PC-3 (cell line): ENCODE measurements at regions of chr12 and their contacts with region 1.

Region 1: DNA sequence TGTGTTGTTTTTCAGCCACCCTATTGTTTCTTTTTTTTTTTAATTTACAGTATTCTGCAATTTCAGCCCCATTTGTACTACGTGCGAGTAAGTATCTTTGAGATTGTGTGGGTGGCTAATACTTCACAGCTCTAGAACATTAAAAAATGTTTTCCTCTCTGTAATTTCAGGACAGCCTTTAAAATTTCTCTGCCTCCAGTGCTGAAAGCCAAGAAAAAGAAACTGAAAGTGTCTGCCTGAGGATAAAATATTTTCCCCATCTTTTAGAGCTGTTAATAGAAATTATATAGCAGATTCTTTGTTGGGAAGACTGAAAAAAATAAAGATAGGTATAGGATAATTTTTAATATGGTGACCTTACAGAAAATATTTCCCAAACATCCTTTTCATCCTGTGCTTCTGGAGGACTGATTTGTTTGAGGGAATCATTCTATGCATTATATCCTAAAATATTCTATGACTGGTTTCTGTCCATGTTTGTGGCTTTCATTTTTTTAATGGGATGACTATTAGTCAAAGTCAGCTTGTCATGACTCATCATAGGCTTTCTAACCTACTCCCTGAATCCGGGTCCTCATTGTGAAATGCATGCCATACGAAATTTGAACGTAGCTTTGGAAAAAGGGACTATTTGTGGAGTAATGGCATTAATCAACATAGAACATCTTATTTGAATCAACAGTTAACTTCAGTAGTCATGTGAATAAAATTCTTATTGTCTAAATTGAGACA is 10.8 kb upstream of the TCTN2 start:
- DNase-seq: peak; percentile 96
- ATAC-seq: peak; percentile 90
- H3K4me3 ChIP-seq: peak overlapping the region; percentile 28; the same call in 1 of the 2 replicates
- H3K27ac ChIP-seq: peak overlapping the region; percentile 80
- H3K4me1 ChIP-seq: peaks cover 27% of the 10 kb centered on the region
- H3K27me3 ChIP-seq: no peaks in the 10 kb centered on the region
- CTCF ChIP-seq: no peak

Region 2: DNA sequence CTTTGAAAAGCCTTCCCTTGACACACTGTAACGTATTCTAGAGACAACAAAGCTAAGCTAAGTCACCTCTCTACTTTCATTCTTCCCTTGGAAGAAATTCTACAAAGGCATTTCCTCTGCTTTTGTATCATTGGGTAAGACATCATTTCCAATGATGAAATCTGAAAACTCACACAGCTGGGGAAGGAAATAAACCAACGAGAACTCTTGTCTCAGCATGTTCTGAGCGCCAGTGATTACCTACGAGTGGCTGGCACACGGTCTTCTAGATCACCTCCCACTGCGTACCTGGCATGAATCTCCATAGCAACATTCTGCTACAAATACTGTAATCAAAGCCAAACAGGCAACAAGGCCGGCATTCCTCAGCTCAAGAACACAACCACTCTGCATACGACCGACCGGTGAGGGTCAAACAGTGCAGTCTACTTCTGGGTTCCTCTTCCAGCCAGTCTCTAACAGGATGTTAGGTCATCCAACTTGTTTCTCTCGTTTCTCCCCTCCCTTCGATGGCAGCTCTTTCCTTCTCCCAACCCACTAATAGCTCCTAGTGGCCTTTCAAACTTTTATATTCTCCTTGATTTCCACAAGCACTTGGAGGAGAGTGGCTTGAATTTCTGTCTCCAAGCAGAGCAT is 771.8 kb before region 1 on chr12:
- CTCF ChIA-PET with region 1: no interaction called
- POLR2A ChIA-PET with region 1: no interaction called
- intact Hi-C with region 1: loop called (anchors 5 kb)
- DNase-seq: peak; percentile 90
- ATAC-seq: peak; percentile 45
- H3K4me3 ChIP-seq: peak overlapping the region; percentile 48
- H3K27ac ChIP-seq: peak overlapping the region; percentile 90
- H3K4me1 ChIP-seq: peaks cover 92% of the 10 kb centered on the region
- H3K27me3 ChIP-seq: no peaks in the 10 kb centered on the region
- CTCF ChIP-seq: no peak

Region 3: GRCh38 chr12:123696646-123697045 is 36.5 kb after region 1 on chr12:
- CTCF ChIA-PET with region 1: no interaction called
- POLR2A ChIA-PET with region 1: no interaction called
- intact Hi-C with region 1: loop called (anchors 1 kb)
- DNase-seq: no peak
- ATAC-seq: peak; percentile 49
- H3K4me3 ChIP-seq: no peak overlapping the region
- H3K27ac ChIP-seq: no peak overlapping the region; the same call in 1 of the 2 replicates
- H3K4me1 ChIP-seq: peaks cover 12% of the 10 kb centered on the region
- H3K27me3 ChIP-seq: no peaks in the 10 kb centered on the region
- CTCF ChIP-seq: no peak

Region 4: DNA sequence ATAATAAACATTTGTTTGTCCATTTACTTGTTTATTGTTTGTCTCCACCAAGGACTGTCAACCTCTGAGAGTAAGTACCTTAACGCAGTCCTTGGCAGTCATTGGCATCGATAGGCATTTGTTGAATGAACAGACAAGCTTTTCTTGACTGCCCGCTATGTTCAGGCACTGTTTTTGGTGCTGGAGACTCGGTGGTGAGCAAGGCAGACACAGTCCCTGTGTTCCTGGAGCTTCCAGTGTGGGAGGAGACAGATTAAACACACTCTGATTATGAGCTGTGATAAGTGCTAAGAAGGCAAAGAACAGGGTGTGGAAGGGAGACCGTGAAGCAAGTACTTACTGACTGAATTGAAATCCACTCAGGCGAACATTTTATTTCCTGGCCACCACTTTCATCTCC is 53.2 kb after region 1 on chr12:
- CTCF ChIA-PET with region 1: no interaction called
- POLR2A ChIA-PET with region 1: interaction called, 3 read pairs
- intact Hi-C with region 1: loop called (anchors 5 kb)
- DNase-seq: peak; percentile 29
- ATAC-seq: peak; percentile 19
- H3K4me3 ChIP-seq: peak overlapping the region; percentile 99
- H3K27ac ChIP-seq: no peak overlapping the region
- H3K4me1 ChIP-seq: peaks cover 18% of the 10 kb centered on the region
- H3K27me3 ChIP-seq: no peaks in the 10 kb centered on the region
- CTCF ChIP-seq: no peak